ENCODE measurements at regions of chr1 and their contacts with region 1.

Region 1: GRCh38 chr1:27979151-27979858 is 19.5 kb downstream of the XKR8 start:
- DNase-seq: no peak
- ATAC-seq: peak; percentile 62
- H3K4me3 ChIP-seq: no peak overlapping the region
- H3K27ac ChIP-seq: no peak overlapping the region
- H3K4me1 ChIP-seq: no peaks in the 10 kb centered on the region
- H3K27me3 ChIP-seq: no peaks in the 10 kb centered on the region
- CTCF ChIP-seq: peak; percentile 59; the same call in 1 of the 2 replicates

Region 2: GRCh38 chr1:27856561-27857343 is 122.6 kb before region 1 on chr1:
- CTCF ChIA-PET with region 1: interaction called, 3 read pairs
- POLR2A ChIA-PET with region 1: no interaction called
- in situ Hi-C with region 1: no loop called
- intact Hi-C with region 1: loop called (anchors 2 kb)
- DNase-seq: no peak
- ATAC-seq: no peak
- H3K4me3 ChIP-seq: no peak overlapping the region
- H3K27ac ChIP-seq: no peak overlapping the region
- H3K4me1 ChIP-seq: no peaks in the 10 kb centered on the region
- H3K27me3 ChIP-seq: no peaks in the 10 kb centered on the region
- CTCF ChIP-seq: no peak

Region 3: DNA sequence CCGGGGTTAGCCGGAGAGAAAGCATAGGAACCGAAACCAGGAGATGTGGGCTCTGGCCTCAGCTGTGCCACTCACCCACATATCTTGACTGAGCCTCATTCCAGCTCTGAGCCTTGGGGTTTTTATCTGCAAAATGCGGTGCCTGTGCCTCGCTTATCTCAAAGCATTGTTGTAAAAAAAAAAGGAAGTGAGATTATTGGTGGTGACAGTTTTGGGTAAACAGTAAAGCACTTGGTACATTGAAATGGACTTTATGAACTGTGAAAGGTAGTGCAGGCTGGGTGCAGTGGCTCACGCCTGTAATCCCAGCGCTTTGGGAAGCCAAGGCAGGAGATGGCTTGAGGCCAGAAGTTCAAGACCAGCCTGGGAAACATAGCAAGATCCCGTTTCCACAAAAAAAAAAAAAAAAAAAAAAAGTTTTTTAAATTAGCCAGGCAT is 193.4 kb after region 1 on chr1:
- CTCF ChIA-PET with region 1: no interaction called
- POLR2A ChIA-PET with region 1: no interaction called
- in situ Hi-C with region 1: no loop called
- intact Hi-C with region 1: no loop called
- DNase-seq: no peak
- ATAC-seq: no peak
- H3K4me3 ChIP-seq: no peak overlapping the region
- H3K27ac ChIP-seq: no peak overlapping the region
- H3K4me1 ChIP-seq: peaks cover 10% of the 10 kb centered on the region
- H3K27me3 ChIP-seq: no peaks in the 10 kb centered on the region
- CTCF ChIP-seq: no peak

Measured in Panc1 (cell line).